ENCODE measurements at regions of chr7 and their contacts with region 1.

Region 1: GRCh38 chr7:47968847-47969774 is 10.3 kb downstream of the HUS1 start:
- DNase-seq: no peak
- H3K4me3 ChIP-seq: no peak overlapping the region
- CTCF ChIP-seq: peak; percentile 90

Region 2: DNA sequence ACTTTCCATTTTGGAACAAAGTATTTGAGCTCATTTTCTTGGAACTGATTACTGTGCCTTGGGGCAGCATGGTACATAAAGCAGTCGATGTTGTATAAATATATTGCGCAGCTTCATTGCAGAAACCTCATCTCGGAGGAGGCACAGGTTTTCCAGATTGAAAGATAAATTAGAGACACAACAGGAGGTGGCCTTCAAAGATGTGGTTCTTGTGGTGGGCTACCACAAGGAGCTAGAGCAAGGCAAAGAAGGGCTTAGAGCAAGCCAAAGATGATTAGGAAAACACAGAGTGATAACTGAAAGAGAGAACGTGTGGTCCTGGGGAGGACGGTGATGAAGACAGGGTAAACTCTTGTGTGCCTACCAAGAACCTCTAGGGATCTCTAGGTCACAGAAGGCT is 218.1 kb before region 1 on chr7:
- CTCF ChIA-PET with region 1: no interaction called
- POLR2A ChIA-PET with region 1: no interaction called
- DNase-seq: no peak
- H3K4me3 ChIP-seq: no peak overlapping the region
- CTCF ChIP-seq: no peak

Region 3: DNA sequence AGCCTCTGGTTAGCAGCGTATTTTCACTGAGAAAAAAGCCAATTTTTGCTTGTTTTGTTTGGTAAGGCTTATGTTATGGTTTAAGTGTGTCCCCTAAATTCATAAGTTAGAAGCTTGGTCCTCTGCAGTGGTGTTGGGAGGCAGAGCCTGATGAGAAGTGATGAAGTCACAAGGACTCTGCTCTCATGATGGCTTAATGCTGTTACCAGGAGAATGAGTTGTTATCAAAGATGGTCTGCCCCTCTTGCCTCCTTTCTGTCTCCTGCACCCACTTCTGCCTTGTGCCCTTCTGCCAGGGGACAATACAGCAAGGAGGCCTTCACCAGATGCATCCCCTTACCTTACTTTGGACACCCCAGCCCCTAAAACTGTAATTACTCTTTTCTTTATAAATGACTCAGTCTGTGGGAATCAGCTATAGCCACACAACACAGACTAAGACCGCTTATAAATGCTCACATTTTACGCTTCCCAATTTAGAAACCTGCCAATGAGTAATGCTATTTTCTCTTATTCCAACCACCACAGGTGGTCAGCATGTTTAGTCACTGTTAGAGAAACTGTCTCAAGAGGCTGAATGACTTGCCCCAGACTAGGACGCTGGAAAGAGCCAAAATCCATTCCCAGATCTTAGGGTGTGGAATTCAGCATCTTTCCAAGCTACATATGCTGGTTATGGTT is 14.7 kb before region 1 on chr7:
- CTCF ChIA-PET with region 1: interaction called, 286 read pairs
- POLR2A ChIA-PET with region 1: interaction called, 5 read pairs
- DNase-seq: no peak
- H3K4me3 ChIP-seq: no peak overlapping the region
- CTCF ChIP-seq: no peak

Region 4: DNA sequence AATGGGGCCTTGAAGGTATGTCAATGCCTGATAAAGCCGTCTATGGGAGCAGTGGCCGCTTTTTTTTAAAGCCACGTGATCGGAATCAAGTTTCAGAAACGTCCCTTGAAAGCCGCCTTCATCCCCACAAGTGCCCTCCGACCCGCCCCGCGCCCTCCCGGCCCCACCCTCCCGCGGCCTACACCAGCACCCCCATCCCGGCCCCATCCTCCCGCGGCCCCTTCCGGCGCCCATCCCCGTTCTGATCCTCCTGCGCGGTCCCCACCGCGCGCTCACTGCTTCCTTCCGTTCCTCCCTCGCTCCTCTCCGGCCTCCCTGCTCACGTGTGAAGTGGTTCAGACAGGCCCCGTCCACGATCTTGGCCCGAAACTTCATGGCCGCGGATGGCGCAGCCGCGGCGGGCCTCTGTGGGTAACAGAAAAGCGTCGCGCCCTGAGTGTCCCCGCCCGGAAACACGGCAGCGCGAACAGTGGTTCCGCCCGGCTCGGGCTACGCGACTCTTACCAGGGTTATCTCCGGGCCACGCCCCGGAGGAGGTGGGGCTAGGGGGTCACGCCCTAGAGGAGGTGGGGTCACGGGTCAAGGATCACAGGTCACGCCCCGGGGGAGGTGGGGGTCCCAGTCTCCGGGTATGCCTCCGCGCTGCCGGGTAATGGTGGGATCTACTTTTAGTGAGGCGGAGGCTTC is 10.2 kb after region 1 on chr7 and contains the start of gene HUS1:
- CTCF ChIA-PET with region 1: interaction called, 18 read pairs
- POLR2A ChIA-PET with region 1: no interaction called
- DNase-seq: no peak
- H3K4me3 ChIP-seq: peak within 1 kb of the TSS; percentile 78
- CTCF ChIP-seq: no peak

Region 5: GRCh38 chr7:48441848-48442492 is 472.9 kb after region 1 on chr7:
- CTCF ChIA-PET with region 1: no interaction called
- POLR2A ChIA-PET with region 1: no interaction called
- DNase-seq: no peak
- H3K4me3 ChIP-seq: no peak overlapping the region
- CTCF ChIP-seq: no peak